Adrenal gland (tissue), 19 donors: ENCODE measurements at regions of chr17 and their contacts with region 1.

Region 1: GRCh38 chr17:34318474-34318873 is 761 bp upstream of the CCL8 start:
- DNase-seq: no peak
- H3K4me3 ChIP-seq: no peak overlapping the region
- H3K27ac ChIP-seq: peak overlapping the region in 2 of 5 donors; percentile 48 to 52
- H3K4me1 ChIP-seq: peaks cover 0 to 17% of the 10 kb centered on the region in 2 donors
- H3K27me3 ChIP-seq: no peaks in the 10 kb centered on the region
- CTCF ChIP-seq: no peak
- POLR2A ChIP-seq: no peak

Region 2: DNA sequence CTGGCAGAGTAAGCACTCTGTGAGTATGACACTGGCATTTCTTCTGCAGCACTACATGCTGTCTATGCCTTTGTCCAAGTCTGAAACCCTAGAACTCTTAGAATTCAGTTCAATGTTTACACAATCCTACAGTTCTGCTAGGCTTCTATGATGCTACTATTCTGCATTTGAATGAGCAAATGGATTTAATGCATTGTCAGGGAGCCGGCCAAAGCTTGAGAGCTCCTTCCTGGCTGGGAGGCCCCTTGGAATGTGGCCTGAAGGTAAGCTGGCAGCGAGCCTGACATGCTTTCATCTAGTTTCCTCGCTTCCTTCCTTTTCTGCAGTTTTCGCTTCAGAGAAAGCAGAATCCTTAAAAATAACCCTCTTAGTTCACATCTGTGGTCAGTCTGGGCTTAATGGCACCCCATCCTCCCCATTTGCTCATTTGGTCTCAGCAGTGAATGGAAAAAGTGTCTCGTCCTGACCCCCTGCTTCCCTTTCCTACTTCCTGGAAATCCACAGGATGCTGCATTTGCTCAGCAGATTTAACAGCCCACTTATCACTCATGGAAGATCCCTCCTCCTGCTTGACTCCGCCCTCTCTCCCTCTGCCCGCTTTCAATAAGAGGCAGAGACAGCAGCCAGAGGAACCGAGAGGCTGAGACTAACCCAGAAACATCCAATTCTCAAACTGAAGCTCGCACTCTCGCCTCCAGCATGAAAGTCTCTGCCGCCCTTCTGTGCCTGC is 63.7 kb before region 1 on chr17 and contains the start of gene CCL2:
- intact Hi-C with region 1: loop called in 1 of 2 experiments (anchors 5 kb)
- DNase-seq: peak in 6 of 7 donors; percentile 64 to 91 (median 76)
- H3K4me3 ChIP-seq: peak within 1 kb of the TSS in 2 of 4 donors; percentile 20 to 49
- H3K27ac ChIP-seq: peak within 1 kb of the TSS in 4 of 5 donors; percentile 34 to 84 (median 66)
- H3K4me1 ChIP-seq: peaks cover 55 to 62% of the 10 kb centered on the region in 2 donors
- H3K27me3 ChIP-seq: no peaks in the 10 kb centered on the region
- CTCF ChIP-seq: no peak
- POLR2A ChIP-seq: peak; percentile 23 to 51
- total RNA-seq, gene CCL2: 7.7 to 241 (median 56.6) TPM

Region 3: DNA sequence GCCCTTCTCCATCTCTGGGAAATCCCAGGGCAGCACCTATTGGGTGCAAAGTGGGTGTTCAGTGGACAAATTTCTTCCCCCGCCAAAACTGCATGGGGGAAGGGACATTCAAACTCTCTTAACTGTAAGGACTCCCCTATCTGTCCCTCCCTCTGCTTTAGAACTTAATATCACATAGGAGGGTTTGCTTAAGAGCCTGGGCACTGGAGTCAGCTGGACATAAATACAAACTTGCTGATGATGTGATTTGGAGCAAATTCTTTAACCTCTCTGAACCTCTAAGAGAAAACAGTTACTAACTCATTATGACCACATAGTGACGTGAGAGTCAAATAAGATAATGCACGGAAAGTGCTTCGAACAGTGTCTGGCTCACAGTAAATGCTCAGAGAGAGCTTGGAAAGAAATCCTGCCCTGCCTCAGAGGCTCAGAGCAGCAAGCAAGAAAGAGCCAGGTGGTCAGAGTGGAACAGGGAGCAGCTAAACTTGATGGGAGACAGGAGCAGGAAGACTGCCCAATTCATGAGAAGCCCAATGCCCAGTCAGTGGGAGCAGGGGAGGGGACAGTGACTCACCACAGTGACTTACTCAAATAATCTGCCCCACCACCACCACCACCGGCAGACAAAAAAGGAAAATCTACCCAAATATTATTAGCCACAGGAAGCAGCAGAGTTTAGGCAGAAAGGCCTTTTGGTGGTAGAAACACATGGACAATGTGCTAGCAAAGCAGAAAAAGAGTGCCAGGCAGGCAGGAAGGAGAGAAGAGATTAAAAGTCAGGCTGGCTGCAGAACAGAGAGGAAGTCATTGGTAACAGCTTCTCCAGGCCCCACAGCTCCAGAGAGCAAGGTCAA is 68.5 kb after region 1 on chr17:
- intact Hi-C with region 1: no loop called
- DNase-seq: peak in 3 of 7 donors; percentile 16 to 31 (median 28)
- H3K4me3 ChIP-seq: no peak overlapping the region
- H3K27ac ChIP-seq: no peak overlapping the region
- H3K4me1 ChIP-seq: no peaks in the 10 kb centered on the region
- H3K27me3 ChIP-seq: peaks cover 2% of the 10 kb centered on the region
- CTCF ChIP-seq: no peak
- POLR2A ChIP-seq: no peak